Activated T-helper 2 cell treated with anti-CD3 and anti-CD28 coated beads, Interferon-gamma antibody, Interleukin-2, Interleukin-4, amounts not matched to agents 10 μg/mL and 5 μg/mL and 100 μg/mL, durations not matched to agents 14 hours and 24 hours and 36 hours (primary cell): ENCODE measurements at regions of chr13 and their contacts with region 1.

Region 1: DNA sequence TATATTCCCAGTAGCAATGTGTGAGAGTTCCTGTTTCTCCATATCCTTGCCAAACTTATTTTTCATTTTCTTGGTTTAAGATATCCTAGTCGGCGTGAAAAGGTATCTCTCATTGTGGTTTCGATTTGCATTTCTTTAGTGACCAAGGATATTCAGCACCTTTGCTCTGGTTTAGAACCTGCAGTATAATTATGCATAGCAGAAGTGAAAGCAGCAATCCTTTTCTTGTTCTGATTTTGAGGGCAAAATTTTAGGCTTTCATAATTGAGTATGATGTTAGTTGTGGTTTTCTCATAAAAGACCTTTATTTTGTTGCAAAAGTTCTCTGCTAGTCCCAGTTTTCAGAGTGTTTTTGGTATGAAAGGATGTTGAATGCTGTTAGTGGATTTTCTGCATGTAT is 491.0 kb downstream of the FGF9 start:
- DNase-seq: no peak
- H3K4me3 Mint-ChIP-seq: no peak overlapping the region
- H3K27ac Mint-ChIP-seq: no peak overlapping the region
- H3K4me1 Mint-ChIP-seq: peaks cover 20% of the 10 kb centered on the region
- H3K27me3 Mint-ChIP-seq: peaks cover 5% of the 10 kb centered on the region

Region 2: DNA sequence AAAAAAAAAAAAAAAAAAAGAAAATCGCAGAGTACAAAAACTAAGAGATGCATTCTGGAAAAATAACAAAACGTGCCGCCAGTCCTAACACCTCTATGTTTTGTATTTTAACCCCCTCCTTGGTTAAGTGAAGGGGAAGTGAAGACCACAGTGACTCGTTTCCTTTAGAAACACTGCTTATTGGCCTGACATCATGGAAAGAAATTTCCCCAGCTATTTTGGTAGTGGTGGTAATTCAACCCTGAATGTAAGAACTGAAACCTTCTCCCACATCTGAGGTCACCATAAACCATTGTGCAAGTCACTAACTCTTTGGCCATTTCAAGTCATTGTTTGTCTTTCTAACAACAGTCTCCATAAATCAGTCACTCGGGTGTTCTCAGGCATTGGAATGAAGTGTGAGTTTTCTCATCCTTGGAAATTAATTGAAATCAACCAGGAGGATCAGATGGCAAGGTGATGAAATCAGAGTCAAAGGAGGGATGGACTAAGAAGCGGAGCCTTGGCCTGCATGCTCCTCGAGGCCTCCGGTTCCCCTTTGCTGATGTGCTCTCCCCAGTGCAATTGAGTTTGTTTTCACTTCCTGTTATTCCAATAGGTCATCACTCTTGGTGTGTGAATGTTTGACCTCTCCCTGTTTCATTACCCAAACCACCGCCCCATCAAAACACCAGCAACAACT is 47.1 kb before region 1 on chr13:
- intact Hi-C with region 1: loop called (anchors 1 kb)
- DNase-seq: peak; percentile 31
- H3K4me3 Mint-ChIP-seq: no peak overlapping the region
- H3K27ac Mint-ChIP-seq: peak overlapping the region; percentile 91
- H3K4me1 Mint-ChIP-seq: peaks cover 51% of the 10 kb centered on the region
- H3K27me3 Mint-ChIP-seq: no peaks in the 10 kb centered on the region